IMR-90 (cell line): ENCODE measurements at regions of chr2 and their contacts with region 1.

Region 1: DNA sequence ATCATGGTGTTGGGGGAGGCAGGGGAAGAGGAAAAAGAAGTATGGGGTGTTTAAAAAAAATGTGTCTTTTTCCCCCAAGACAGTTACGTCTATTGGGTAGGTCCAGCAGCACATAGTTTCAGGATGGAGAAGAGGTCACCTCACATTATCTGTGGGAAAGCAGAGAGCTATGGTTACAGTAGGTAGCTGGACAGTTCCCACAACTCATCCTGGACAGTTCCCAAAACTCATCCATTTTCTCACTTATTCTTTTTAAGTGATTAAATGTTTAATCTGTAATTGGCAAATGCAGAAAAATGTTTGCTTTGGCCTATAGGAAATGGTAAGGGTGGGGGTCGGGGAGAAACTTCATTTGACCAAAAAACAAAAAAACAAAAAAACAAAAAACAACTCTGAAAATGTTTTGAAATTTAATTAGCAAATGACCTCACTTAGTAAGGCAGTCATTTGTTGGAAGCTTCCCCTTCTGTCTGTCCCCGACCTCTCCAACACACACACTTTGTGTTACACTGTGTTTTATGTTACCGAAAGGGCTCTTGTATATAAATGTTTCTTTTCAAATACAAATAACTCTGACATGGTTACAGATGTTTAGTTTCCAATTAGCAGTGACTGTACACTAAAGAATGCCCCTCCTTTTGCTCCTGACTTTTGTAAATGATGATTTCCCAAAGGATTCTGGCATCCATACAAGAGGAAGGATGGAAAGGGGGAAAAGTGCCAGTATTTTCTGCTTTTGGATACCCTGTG is 173.3 kb upstream of the ZFP36L2 start:
- DNase-seq: peak; percentile 87
- ATAC-seq: peak; percentile 83
- H3K4me3 ChIP-seq: no peak overlapping the region
- H3K27ac ChIP-seq: peak overlapping the region; percentile 98; the same call in 1 of the 2 replicates
- H3K4me1 ChIP-seq: peaks cover 15% of the 10 kb centered on the region
- H3K27me3 ChIP-seq: no peaks in the 10 kb centered on the region
- CTCF ChIP-seq: no peak
- POLR2A ChIP-seq: no peak
- RAD21 ChIP-seq: no peak

Region 2: GRCh38 chr2:43358410-43359201 is 41.1 kb before region 1 on chr2:
- CTCF ChIA-PET with region 1: no interaction called
- POLR2A ChIA-PET with region 1: no interaction called
- dilution Hi-C with region 1: no loop called
- in situ Hi-C with region 1: no loop called
- intact Hi-C with region 1: loop called (anchors 5 kb)
- DNase-seq: peak; percentile 21
- ATAC-seq: peak; percentile 62
- H3K4me3 ChIP-seq: no peak overlapping the region
- H3K27ac ChIP-seq: peak overlapping the region; percentile 87; the same call in 1 of the 2 replicates
- H3K4me1 ChIP-seq: peaks cover 10% of the 10 kb centered on the region
- H3K27me3 ChIP-seq: no peaks in the 10 kb centered on the region
- CTCF ChIP-seq: no peak
- POLR2A ChIP-seq: no peak
- RAD21 ChIP-seq: no peak